Activated CD4-positive, alpha-beta T cell treated with anti-CD3 and anti-CD28 coated beads, Interleukin-2, amount 10 ng/mL, durations not matched to agents 24 days and 14 days (primary cell): ENCODE measurements at regions of chr16 and their contacts with region 1.

Region 1: DNA sequence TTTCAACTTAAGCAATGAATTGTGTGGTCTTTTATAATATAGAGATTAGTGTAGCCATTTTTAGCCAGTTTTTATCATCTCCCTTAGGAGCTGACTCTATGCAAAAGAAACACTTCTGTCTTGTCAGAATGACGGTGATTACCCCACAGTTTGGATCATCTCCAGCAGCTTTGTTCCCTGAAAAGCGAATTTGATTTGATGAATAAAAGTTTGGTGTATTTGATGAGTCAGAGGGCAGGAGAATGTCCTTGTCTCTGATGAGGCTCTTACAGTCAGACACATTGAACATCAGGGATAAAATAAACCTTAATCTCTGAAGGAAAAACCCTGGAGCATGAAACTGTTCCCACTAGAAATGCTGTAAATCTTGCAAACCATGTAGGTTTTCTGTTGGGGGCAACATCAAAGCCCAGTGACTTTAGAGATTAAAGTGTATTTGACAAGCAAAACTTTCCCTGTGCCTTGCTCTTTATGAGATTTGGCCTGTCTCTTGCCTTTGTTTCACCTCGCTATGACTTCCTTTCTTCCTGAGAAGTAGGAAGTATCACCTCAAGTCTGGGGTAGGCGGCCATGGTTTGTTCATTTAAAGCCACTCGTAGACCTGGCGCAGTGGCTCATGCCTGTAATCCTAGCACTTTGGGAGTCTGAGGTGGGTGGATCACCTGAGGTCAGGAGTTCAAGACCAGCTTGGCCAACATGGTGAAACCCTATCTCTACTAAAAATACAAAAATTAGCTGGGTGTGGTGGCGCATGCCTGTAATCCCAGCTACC is 209.3 kb downstream of the FTO start:
- DNase-seq: peak; percentile 71
- H3K4me3 Mint-ChIP-seq: peak overlapping the region; percentile 17
- H3K27ac Mint-ChIP-seq: peak overlapping the region; percentile 70
- H3K4me1 Mint-ChIP-seq: peaks cover 32% of the 10 kb centered on the region
- H3K27me3 Mint-ChIP-seq: no peaks in the 10 kb centered on the region

Region 2: GRCh38 chr16:53111078-53111791 is 802.0 kb before region 1 on chr16:
- intact Hi-C with region 1: no loop called
- DNase-seq: no peak
- H3K4me3 Mint-ChIP-seq: no peak overlapping the region
- H3K27ac Mint-ChIP-seq: no peak overlapping the region
- H3K4me1 Mint-ChIP-seq: no peaks in the 10 kb centered on the region
- H3K27me3 Mint-ChIP-seq: no peaks in the 10 kb centered on the region

Region 3: GRCh38 chr16:53865494-53865863 is 47.8 kb before region 1 on chr16:
- intact Hi-C with region 1: loop called (anchors 2 kb)
- DNase-seq: peak; percentile 51
- H3K4me3 Mint-ChIP-seq: peak overlapping the region; percentile 58
- H3K27ac Mint-ChIP-seq: peak overlapping the region; percentile 89
- H3K4me1 Mint-ChIP-seq: peaks cover 16% of the 10 kb centered on the region
- H3K27me3 Mint-ChIP-seq: no peaks in the 10 kb centered on the region

Region 4: GRCh38 chr16:53872248-53873221 is 40.8 kb before region 1 on chr16:
- intact Hi-C with region 1: loop called (anchors 2 kb)
- DNase-seq: peak; percentile 40
- H3K4me3 Mint-ChIP-seq: no peak overlapping the region
- H3K27ac Mint-ChIP-seq: peak overlapping the region; percentile 41
- H3K4me1 Mint-ChIP-seq: peaks cover 10% of the 10 kb centered on the region
- H3K27me3 Mint-ChIP-seq: no peaks in the 10 kb centered on the region

Region 5: DNA sequence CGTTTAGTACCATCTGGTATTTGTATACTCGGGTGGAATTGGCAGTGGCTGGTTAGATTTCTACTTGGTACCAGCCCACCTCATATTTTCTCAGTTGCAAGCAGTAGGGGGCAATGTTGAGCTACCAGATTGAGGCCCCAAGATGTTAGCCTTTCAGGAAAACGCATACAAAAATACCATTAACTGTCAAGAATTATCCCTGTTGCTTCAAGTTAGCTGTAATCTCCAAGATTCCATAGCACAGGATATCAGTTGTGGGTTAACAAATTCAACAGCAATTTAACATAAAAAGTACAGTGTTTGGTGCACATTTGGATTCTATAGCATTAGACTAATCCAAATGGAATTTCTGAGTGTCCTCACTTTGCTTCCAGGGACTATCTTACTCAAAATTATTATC is 21.1 kb before region 1 on chr16:
- intact Hi-C with region 1: no loop called
- DNase-seq: peak; percentile 89
- H3K4me3 Mint-ChIP-seq: no peak overlapping the region
- H3K27ac Mint-ChIP-seq: peak overlapping the region; percentile 58
- H3K4me1 Mint-ChIP-seq: peaks cover 28% of the 10 kb centered on the region
- H3K27me3 Mint-ChIP-seq: no peaks in the 10 kb centered on the region

Region 6: GRCh38 chr16:53952215-53953208 is 39.2 kb after region 1 on chr16:
- intact Hi-C with region 1: loop called (anchors 5 kb)
- DNase-seq: peak; percentile 68
- H3K4me3 Mint-ChIP-seq: peak overlapping the region; percentile 70
- H3K27ac Mint-ChIP-seq: peak overlapping the region; percentile 58
- H3K4me1 Mint-ChIP-seq: peaks cover 41% of the 10 kb centered on the region
- H3K27me3 Mint-ChIP-seq: no peaks in the 10 kb centered on the region